ENCODE measurements at regions of chr14 and their contacts with region 1.

Region 1: DNA sequence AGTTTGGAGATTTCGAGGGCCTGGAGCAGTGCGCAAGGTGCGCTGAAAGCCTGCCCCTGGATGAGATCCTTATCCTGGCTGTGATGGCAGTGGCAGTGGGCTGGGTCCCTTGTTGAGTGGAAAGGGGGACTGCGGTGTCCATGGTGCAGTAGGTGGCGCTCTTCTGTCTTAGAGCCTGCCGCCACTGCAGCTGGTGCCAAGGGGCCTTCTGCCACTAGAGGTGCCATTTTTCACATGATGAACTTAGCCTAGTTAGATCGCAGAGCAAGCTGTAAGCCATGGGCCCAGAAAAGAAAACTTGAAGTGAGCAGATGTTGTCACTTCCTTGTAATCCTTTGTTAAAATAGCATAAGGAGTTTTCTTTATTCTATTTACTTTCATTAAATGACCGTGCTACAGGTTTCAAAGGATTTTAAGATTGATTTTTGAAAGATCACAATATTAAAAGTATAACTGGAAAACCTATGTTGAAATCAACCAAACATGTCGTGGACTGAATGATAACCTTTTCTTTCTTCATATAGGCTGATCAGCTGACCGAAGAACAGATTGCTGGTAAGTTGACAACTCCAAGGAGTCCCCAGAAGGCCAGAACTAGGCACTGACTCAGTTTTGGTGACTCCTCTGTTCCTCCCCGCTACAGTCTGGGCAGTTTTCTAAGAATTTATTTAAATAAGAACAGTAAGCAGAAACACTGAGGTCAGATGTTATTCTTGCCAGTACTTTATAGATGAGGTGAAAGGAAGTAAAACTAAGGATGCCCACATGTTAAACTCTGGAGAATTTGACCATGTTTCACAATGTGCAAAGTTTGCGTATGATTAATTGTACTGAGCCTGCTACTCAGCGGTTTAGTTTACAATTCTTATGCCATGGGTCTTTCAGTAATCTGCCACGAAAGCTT is 3.0 kb downstream of the CALM1 start:
- DNase-seq: peak; percentile 95
- H3K4me3 Mint-ChIP-seq: peak overlapping the region; percentile 97
- H3K27ac Mint-ChIP-seq: peak overlapping the region; percentile 98
- H3K4me1 Mint-ChIP-seq: peaks cover 49% of the 10 kb centered on the region
- H3K27me3 Mint-ChIP-seq: no peaks in the 10 kb centered on the region

Region 2: DNA sequence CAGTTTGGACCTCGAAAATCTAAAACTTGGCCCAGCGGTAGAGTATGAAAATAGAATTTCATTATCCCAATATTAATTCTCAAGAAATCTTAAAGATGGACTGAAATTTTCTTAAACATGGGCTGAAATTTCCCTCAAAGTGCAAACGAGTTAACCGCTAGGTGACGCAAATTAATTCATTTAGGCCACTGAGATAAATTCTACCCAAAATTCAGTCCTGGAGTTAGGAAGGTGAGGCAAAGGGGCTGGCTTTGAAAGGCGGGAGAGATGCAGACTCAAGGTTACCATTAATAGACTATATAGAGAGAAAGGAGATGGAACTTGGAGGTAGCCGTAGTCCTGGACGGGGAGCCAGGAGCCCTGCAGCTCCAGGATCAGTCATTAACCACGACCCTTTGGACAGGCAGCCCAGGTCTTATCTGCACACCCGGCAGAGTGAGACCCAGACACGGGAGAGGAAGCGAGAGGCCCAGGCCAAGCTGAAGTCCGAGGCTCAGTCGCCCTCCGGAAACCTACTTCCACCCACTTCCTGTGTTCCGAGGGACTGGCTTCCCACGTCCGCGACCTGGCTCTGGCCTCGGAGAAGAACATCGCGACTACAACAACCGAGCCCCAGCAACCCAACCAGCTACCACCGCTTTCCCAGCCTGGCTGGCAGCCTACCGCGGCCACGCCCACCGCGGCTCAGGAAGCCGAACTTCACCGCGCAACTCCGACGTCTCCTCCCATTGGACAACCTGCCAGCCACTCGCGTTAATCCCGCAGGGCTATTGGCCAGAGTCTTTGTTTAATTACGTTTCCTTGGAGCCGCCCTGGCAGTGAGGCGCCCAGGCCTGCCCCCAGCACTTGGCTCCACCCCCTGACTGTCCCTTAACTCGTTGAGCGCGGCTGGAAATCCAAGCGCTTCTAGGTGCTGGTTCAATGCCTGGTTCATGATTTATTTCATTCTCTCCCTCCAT is 445.4 kb before region 1 on chr14 and contains the start of gene EFCAB11:
- intact Hi-C with region 1: loop called (anchors 5 kb)
- DNase-seq: peak; percentile 99
- H3K4me3 Mint-ChIP-seq: peak within 1 kb of the TSS; percentile 90
- H3K27ac Mint-ChIP-seq: peak within 1 kb of the TSS; percentile 90
- H3K4me1 Mint-ChIP-seq: peaks cover 40% of the 10 kb centered on the region
- H3K27me3 Mint-ChIP-seq: no peaks in the 10 kb centered on the region
- total RNA-seq, gene EFCAB11: 6.8 and 7.8 TPM in 2 replicates

Region 3: GRCh38 chr14:90331497-90332435 is 68.0 kb before region 1 on chr14 and contains the start of gene NRDE2:
- intact Hi-C with region 1: loop called (anchors 2 kb)
- DNase-seq: peak; percentile 98
- H3K4me3 Mint-ChIP-seq: peak within 1 kb of the TSS; percentile 95
- H3K27ac Mint-ChIP-seq: peak within 1 kb of the TSS; percentile 93
- H3K4me1 Mint-ChIP-seq: peaks cover 18% of the 10 kb centered on the region
- H3K27me3 Mint-ChIP-seq: peaks cover 25% of the 10 kb centered on the region
- total RNA-seq, gene NRDE2: 22.1 and 22.8 TPM in 2 replicates

Region 4: GRCh38 chr14:90416720-90417119 is 16.9 kb after region 1 on chr14:
- intact Hi-C with region 1: no loop called
- DNase-seq: no peak
- H3K4me3 Mint-ChIP-seq: no peak overlapping the region
- H3K27ac Mint-ChIP-seq: no peak overlapping the region
- H3K4me1 Mint-ChIP-seq: no peaks in the 10 kb centered on the region
- H3K27me3 Mint-ChIP-seq: peaks cover 3% of the 10 kb centered on the region

Region 5: DNA sequence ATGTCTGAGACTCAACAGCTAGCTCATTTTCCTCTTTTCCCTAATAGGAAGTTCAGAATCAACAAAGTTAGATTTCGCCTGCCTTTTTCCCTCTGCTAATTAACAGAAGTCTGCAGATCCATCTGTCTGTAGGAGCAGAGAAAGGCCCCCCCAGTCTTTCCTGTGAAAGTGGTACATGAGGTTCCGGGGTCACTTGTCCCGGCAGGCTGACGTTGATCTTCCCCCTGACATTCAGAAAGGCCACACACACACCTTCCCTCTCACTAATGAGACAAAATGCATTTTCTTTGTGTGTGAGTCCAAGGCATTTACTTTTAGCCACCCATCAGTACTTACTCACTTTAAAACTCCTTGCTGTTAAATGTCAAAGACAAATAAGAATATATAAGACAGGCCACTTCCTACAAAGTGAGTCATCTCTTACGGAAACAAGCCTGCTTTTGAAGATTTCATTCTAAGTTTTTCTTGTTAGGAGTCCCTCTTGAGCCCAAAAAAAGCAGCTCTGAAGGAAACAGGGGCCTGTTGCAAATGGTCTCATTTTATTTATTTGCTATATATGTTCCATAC is 277.8 kb after region 1 on chr14:
- intact Hi-C with region 1: loop called (anchors 5 kb)
- DNase-seq: peak; percentile 66
- H3K4me3 Mint-ChIP-seq: peak overlapping the region; percentile 65
- H3K27ac Mint-ChIP-seq: peak overlapping the region; percentile 89
- H3K4me1 Mint-ChIP-seq: peaks cover 32% of the 10 kb centered on the region
- H3K27me3 Mint-ChIP-seq: no peaks in the 10 kb centered on the region

Region 6: GRCh38 chr14:90758028-90758889 is 358.5 kb after region 1 on chr14:
- intact Hi-C with region 1: loop called (anchors 1 kb)
- DNase-seq: peak; percentile 99
- H3K4me3 Mint-ChIP-seq: peak overlapping the region; percentile 81
- H3K27ac Mint-ChIP-seq: peak overlapping the region; percentile 82
- H3K4me1 Mint-ChIP-seq: peaks cover 14% of the 10 kb centered on the region
- H3K27me3 Mint-ChIP-seq: peaks cover 33% of the 10 kb centered on the region

Region 7: DNA sequence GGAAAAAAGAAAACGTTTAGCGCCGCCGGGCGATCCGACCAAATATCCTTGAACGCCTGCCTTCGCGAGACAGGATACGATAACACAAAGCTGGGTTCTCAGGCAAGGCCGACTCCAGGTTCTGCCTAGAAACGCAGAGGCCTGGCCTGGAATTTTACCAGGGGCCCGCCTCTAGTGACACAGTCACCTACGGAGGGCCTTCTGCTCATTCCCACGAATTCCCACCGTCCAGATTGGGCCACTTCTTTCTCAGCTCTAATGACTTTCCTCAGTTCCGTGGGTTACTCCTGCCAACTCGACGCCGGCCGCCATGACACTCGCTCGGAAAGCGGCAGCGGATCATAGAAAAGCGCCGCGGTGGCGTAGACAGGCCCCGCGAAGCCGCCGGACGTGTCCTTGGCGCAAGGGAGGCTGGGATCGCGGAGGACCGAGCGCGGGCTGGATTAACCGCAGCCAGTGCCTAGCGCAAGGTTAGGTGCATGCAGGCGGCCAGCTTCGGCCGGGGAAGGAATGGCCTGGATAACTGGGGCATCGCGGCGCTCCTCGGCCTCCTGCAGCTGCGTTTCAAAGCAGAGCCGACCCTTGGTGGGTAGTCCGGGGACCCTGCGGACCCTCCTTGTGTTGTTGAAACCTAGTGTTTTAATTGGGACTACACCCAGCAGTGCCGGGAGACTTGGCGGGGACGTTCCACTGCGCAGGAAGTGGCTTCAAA is 1640.1 kb after region 1 on chr14 and contains the start of gene TRIP11:
- intact Hi-C with region 1: loop called (anchors 2 kb)
- DNase-seq: peak; percentile 99
- H3K4me3 Mint-ChIP-seq: peak within 1 kb of the TSS; percentile 93
- H3K27ac Mint-ChIP-seq: peak within 1 kb of the TSS; percentile 98
- H3K4me1 Mint-ChIP-seq: peaks cover 31% of the 10 kb centered on the region
- H3K27me3 Mint-ChIP-seq: no peaks in the 10 kb centered on the region
- total RNA-seq, gene TRIP11: 38.6 and 42.0 TPM in 2 replicates